ENCODE measurements at regions of chr5 and their contacts with region 1.

Region 1: GRCh38 chr5:54944364-54944763 is 41.0 kb downstream of the ESM1 start:
- DNase-seq: peak; percentile 65
- ATAC-seq: peak; percentile 71
- H3K4me3 Mint-ChIP-seq: no peak overlapping the region
- H3K27ac Mint-ChIP-seq: no peak overlapping the region
- H3K4me1 Mint-ChIP-seq: peaks cover 14% of the 10 kb centered on the region
- H3K27me3 Mint-ChIP-seq: peaks cover 3% of the 10 kb centered on the region

Region 2: GRCh38 chr5:54905943-54906537 is 38.3 kb before region 1 on chr5:
- CTCF ChIA-PET with region 1: interaction called, 32 read pairs
- DNase-seq: peak; percentile 85
- ATAC-seq: no peak
- H3K4me3 Mint-ChIP-seq: no peak overlapping the region
- H3K27ac Mint-ChIP-seq: no peak overlapping the region
- H3K4me1 Mint-ChIP-seq: peaks cover 66% of the 10 kb centered on the region
- H3K27me3 Mint-ChIP-seq: peaks cover 26% of the 10 kb centered on the region

Region 3: DNA sequence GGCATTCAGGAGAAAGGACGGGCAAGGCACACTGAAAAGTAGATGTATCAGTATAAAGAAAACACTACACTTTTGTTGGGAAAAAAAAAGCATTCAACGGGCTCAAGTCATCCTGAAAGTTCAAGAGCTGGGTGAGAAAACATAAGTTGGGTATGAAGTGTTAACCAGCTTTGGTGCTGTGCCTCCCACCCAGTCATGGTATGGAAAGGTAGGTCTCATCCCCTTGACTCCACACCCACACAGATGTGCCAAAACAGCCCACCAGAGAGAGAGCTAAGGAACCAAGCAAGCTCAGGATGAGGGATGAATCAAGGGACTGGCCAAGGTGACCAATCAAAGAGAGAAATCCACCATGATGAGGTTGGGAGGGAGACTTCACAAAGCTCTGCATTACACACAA is 13.6 kb before region 1 on chr5:
- CTCF ChIA-PET with region 1: interaction called, 17 read pairs
- DNase-seq: peak; percentile 47
- ATAC-seq: peak; percentile 48
- H3K4me3 Mint-ChIP-seq: no peak overlapping the region
- H3K27ac Mint-ChIP-seq: no peak overlapping the region
- H3K4me1 Mint-ChIP-seq: peaks cover 15% of the 10 kb centered on the region
- H3K27me3 Mint-ChIP-seq: peaks cover 24% of the 10 kb centered on the region

Region 4: DNA sequence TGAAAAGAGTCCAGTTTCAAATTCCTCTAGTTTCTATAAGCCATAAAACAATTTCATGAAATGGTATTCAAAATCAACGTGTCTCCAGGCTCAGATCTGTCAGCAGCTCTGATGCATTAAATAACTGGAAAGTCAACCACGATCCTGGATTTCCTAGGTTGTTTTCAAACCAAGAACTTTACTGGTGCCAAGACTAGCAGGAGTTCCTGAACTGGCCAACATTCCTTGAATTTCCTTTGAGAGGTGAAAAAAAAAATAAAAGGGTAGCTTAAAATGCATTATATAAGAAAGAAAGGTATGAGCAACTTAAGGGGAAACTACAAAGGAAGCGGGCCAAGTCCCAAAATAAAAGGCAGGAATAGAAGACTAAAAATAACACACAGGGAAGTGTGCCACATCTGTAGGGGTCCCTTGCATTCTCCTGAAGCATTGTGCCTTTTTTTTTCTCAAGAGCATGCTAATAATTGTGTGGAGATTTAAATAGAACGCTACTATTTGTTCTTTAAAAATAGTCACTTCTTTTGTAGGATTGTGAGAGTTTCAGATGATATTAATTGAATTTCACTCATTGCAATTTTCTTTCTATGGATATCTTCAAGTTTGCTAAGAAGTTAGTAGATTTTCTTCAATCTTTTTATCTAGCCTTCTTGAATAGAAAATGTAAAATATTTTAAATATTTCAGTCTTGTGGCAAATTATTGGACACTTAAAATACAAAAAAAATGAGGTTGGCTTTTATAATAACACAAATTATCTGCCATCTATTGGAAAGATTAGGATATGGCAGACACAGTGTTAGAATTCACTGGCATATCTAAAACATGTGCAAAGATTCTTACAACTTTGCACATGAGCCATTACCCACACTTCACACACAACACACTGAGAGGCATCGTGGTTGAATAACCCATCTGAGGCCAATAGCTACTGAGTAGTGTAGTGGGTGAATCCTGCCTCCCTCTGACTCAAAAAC is 25.8 kb after region 1 on chr5:
- CTCF ChIA-PET with region 1: interaction called, 20 read pairs
- DNase-seq: no peak
- ATAC-seq: no peak
- H3K4me3 Mint-ChIP-seq: no peak overlapping the region
- H3K27ac Mint-ChIP-seq: no peak overlapping the region
- H3K4me1 Mint-ChIP-seq: no peaks in the 10 kb centered on the region
- H3K27me3 Mint-ChIP-seq: peaks cover 3% of the 10 kb centered on the region

Region 5: GRCh38 chr5:55037046-55037771 is 92.8 kb after region 1 on chr5:
- CTCF ChIA-PET with region 1: interaction called, 23 read pairs
- DNase-seq: peak; percentile 93
- ATAC-seq: peak; percentile 96
- H3K4me3 Mint-ChIP-seq: peak overlapping the region; percentile 14
- H3K27ac Mint-ChIP-seq: peak overlapping the region; percentile 97
- H3K4me1 Mint-ChIP-seq: peaks cover 55% of the 10 kb centered on the region
- H3K27me3 Mint-ChIP-seq: no peaks in the 10 kb centered on the region

Region 6: DNA sequence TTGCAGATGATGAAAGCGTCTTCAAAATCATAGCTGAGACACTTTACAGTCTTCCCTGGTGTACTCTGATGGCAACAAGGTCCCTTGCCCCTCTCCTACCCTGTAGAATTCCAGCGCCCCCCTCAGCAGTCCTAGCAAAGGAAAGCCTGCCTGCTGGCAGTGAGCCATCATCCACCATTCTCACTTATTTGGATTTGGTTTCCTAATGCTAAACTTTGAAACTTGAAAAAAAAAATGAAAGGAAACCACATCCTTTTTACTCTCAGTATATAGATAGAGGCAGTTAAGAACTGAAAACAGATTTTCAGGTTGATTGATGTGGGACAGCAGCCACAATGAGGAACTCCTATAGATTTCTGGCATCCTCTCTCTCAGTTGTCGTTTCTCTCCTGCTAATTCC is 158.0 kb after region 1 on chr5 and contains the start of gene GZMA:
- CTCF ChIA-PET with region 1: interaction called, 30 read pairs
- DNase-seq: peak; percentile 68
- ATAC-seq: peak; percentile 62
- H3K4me3 Mint-ChIP-seq: peak within 1 kb of the TSS; percentile 91
- H3K27ac Mint-ChIP-seq: peak within 1 kb of the TSS; percentile 97
- H3K4me1 Mint-ChIP-seq: peaks cover 73% of the 10 kb centered on the region
- H3K27me3 Mint-ChIP-seq: no peaks in the 10 kb centered on the region
- total RNA-seq, gene GZMA: 927 to 1,065 TPM

Region 7: GRCh38 chr5:55159763-55160492 is 215.6 kb after region 1 on chr5 and contains the start of gene GPX8:
- CTCF ChIA-PET with region 1: interaction called, 20 read pairs
- DNase-seq: no peak
- ATAC-seq: peak; percentile 76
- H3K4me3 Mint-ChIP-seq: no peak within 1 kb of the TSS
- H3K27ac Mint-ChIP-seq: no peak within 1 kb of the TSS
- H3K4me1 Mint-ChIP-seq: peaks cover 4% of the 10 kb centered on the region
- H3K27me3 Mint-ChIP-seq: peaks cover 45% of the 10 kb centered on the region
- total RNA-seq, gene GPX8: not detected

Measured in activated CD8-positive, alpha-beta memory T cell treated with anti-CD3 and anti-CD28 coated beads, Interleukin-2, amount 10 ng/mL, durations not matched to agents 7 days and 5 days (primary cell).